Lower leg skin (tissue), 4 donors: ENCODE measurements at regions of chr1 and their contacts with region 1.

Region 1: DNA sequence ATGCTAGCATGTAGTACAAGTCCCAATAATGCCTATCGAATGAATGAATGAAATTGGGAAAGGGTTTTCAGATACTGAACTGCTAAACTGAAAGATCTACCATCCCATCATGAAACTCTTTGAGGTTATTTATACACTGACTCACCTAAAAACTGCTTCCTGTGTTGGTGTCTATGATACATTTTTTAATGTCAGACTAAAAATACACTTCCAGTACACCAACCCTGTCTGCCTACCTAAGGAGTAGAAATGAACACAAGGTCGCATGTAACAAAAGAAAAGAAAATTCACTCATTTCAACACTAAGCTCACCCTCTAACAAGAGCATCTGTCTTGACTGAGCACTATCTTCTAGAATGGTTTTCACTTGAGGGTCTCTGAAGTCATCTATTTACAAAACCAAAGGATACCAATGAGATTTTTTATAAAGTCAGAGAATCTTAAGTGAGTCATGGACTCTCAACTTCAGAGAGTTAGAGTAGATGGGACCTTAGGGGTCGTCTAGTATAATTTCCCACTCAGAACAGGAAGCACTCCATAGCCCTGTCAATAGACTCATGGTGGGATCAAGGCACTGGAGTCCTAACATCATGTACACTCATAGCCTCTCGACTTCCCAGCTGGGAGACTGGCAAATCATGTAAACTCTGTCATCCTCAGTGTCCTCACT is 53.4 kb downstream of the WLS start:
- DNase-seq: no peak
- H3K4me3 ChIP-seq: no peak overlapping the region
- CTCF ChIP-seq: no peak
- POLR2A ChIP-seq: no peak

Region 2: GRCh38 chr1:69569576-69570328 is 1390.8 kb after region 1 on chr1:
- intact Hi-C with region 1: loop called (anchors 5 kb)
- DNase-seq: no peak
- H3K4me3 ChIP-seq: no peak overlapping the region
- CTCF ChIP-seq: no peak
- POLR2A ChIP-seq: no peak